ENCODE measurements at regions of chr11 and their contacts with region 1.

Region 1: GRCh38 chr11:96424693-96425092 is 34.9 kb downstream of the JRKL start:
- DNase-seq: peak; percentile 4
- H3K4me3 Mint-ChIP-seq: no peak overlapping the region
- H3K27ac Mint-ChIP-seq: no peak overlapping the region
- H3K4me1 Mint-ChIP-seq: no peaks in the 10 kb centered on the region
- H3K27me3 Mint-ChIP-seq: peaks cover 80% of the 10 kb centered on the region
- CTCF ChIP-seq: no peak

Region 2: DNA sequence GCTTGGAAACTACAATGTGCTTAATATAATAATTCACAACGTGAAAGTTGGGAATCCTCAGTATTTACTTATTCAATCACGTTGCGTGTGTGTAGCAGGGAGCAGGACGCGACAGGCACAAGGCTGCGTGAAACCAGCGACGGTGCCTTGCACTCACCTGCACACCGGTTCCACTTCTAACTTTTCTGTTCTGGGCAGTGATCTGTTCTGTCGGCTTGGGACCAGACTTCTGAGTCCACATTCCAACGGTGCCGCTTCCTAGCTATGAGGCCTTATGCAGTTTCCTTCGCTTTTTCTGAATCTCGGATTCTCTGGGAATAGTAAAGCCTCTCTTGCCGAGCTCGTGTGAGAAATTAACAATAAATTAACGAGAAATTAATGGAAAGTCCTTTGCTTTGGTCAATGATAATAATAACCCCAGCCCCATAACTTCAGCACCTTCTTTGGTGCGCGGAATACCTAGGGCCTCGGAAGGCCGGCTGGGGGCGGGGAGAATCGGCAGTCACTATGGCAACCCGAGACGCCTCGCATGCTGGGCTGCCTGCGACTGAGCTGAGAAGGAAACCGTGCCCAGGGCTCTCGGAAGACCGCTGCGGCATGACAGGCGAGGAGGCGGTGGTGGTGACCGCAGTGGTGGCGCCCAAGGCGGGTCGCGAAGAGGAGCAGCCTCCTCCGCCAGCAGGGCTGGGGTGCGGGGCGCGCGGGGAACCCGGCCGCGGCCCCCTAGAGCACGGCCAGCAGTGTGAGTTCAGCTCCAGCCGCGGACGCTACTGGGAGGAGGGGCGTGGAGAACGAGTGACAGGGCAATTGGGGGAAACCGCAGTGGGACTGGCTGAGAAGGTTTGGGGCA is 1912.5 kb before region 1 on chr11 and contains the start of gene C11orf97:
- CTCF ChIA-PET with region 1: no interaction called
- POLR2A ChIA-PET with region 1: no interaction called
- intact Hi-C with region 1: loop called (anchors 10 kb)
- DNase-seq: peak; percentile 19
- H3K4me3 Mint-ChIP-seq: peak within 1 kb of the TSS; percentile 77
- H3K27ac Mint-ChIP-seq: no peak within 1 kb of the TSS
- H3K4me1 Mint-ChIP-seq: peaks cover 21% of the 10 kb centered on the region
- H3K27me3 Mint-ChIP-seq: no peaks in the 10 kb centered on the region
- CTCF ChIP-seq: no peak
- total RNA-seq, gene C11orf97: not detected in 2 replicates

Region 3: GRCh38 chr11:95764267-95764898 is 660.3 kb before region 1 on chr11:
- CTCF ChIA-PET with region 1: interaction called, 4 read pairs
- POLR2A ChIA-PET with region 1: no interaction called
- intact Hi-C with region 1: loop called (anchors 10 kb)
- DNase-seq: peak; percentile 54
- H3K4me3 Mint-ChIP-seq: no peak overlapping the region
- H3K27ac Mint-ChIP-seq: no peak overlapping the region
- H3K4me1 Mint-ChIP-seq: peaks cover 10% of the 10 kb centered on the region
- H3K27me3 Mint-ChIP-seq: no peaks in the 10 kb centered on the region
- CTCF ChIP-seq: peak; percentile 61

Measured in MCF 10A (cell line).